Naive thymus-derived CD4-positive, alpha-beta T cell (primary cell): ENCODE measurements at regions of chr16 and their contacts with region 1.

Region 1: GRCh38 chr16:89720813-89721545 is at the starts of genes VPS9D1 and ZNF276:
- DNase-seq: peak in 7 of 9 donors; percentile 73 to 88 (median 87)
- ATAC-seq: peak; percentile 67
- H3K4me3 ChIP-seq: peak within 1 kb of the TSS; percentile 94
- H3K4me3 Mint-ChIP-seq: peak within 1 kb of the TSS; percentile 88 to 99 (median 94)
- H3K27ac ChIP-seq: peak within 1 kb of the TSS; percentile 89
- H3K27ac Mint-ChIP-seq: peak within 1 kb of the TSS; percentile 88 to 99 (median 95)
- H3K4me1 ChIP-seq: peaks cover 27 to 35% of the 10 kb centered on the region in 2 donors
- H3K4me1 Mint-ChIP-seq: peaks cover 13 to 37% (median 30%) of the 10 kb centered on the region in 7 donors
- H3K27me3 ChIP-seq: no peaks in the 10 kb centered on the region
- H3K27me3 Mint-ChIP-seq: no peaks in the 10 kb centered on the region
- total RNA-seq, gene VPS9D1: 11.2 to 28.9 (median 13.3) TPM
- total RNA-seq, gene ZNF276: 75.4 to 160 (median 137) TPM

Region 2: GRCh38 chr16:88706288-88706964 is 1014.6 kb before region 1 on chr16 and contains the starts of genes CTU2 and RNF166:
- CTCF ChIA-PET with region 1: no interaction called
- POLR2A ChIA-PET with region 1: no interaction called
- intact Hi-C with region 1: loop called in 1 of 2 experiments (anchors 10 kb)
- DNase-seq: peak; percentile 86 to 98 (median 92)
- ATAC-seq: peak; percentile 84
- H3K4me3 ChIP-seq: peak within 1 kb of the TSS; percentile 79
- H3K4me3 Mint-ChIP-seq: peak within 1 kb of the TSS; percentile 78 to 98 (median 94)
- H3K27ac ChIP-seq: peak within 1 kb of the TSS; percentile 88
- H3K27ac Mint-ChIP-seq: peak within 1 kb of the TSS; percentile 85 to 98 (median 97)
- H3K4me1 ChIP-seq: peaks cover 25 to 40% of the 10 kb centered on the region in 2 donors
- H3K4me1 Mint-ChIP-seq: peaks cover 31 to 45% (median 41%) of the 10 kb centered on the region in 7 donors
- H3K27me3 ChIP-seq: no peaks in the 10 kb centered on the region
- H3K27me3 Mint-ChIP-seq: no peaks in the 10 kb centered on the region
- total RNA-seq, gene CTU2: 26.0 to 43.3 (median 28.3) TPM
- total RNA-seq, gene RNF166: 99.8 to 324 (median 133) TPM

Region 3: DNA sequence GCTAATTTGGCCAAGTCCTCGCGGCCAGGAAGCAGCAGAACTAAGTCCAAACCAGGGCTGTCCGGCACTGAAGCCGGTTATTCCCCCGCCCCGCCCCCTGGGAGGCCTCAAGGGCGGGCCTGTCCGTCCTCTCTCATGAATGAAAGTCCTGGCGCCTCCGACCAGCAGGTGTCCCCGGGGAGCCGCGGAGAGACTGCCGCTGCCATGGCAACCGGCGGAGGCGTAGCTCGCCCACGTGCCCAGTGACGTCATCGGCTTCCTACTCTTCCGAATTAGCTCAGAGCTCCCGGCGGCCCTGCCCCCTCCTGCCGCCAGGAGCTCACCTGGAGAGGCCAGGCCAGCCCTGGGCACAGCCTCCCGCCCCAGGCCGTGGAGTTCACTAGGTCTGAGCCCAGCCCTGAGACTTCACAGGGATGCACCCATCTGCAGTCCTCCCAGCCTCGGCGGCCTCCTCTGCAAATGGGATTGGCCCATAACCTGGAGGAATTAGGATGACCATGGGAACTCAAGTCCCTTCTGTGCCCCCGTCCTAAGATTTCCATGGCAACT is 20.8 kb before region 1 on chr16:
- CTCF ChIA-PET with region 1: interaction called, 17 read pairs
- POLR2A ChIA-PET with region 1: interaction called, 50 read pairs
- intact Hi-C with region 1: loop called (anchors 1 kb)
- DNase-seq: peak; percentile 88 to 99 (median 92)
- ATAC-seq: peak; percentile 52
- H3K4me3 ChIP-seq: peak overlapping the region; percentile 41
- H3K4me3 Mint-ChIP-seq: peak overlapping the region; percentile 52 to 84 (median 74)
- H3K27ac ChIP-seq: peak overlapping the region; percentile 73
- H3K27ac Mint-ChIP-seq: peak overlapping the region in 8 of 9 donors; percentile 46 to 89 (median 80)
- H3K4me1 ChIP-seq: peaks cover 27 to 28% of the 10 kb centered on the region in 2 donors
- H3K4me1 Mint-ChIP-seq: peaks cover 0 to 34% (median 17%) of the 10 kb centered on the region in 7 donors
- H3K27me3 ChIP-seq: no peaks in the 10 kb centered on the region
- H3K27me3 Mint-ChIP-seq: no peaks in the 10 kb centered on the region

Region 4: DNA sequence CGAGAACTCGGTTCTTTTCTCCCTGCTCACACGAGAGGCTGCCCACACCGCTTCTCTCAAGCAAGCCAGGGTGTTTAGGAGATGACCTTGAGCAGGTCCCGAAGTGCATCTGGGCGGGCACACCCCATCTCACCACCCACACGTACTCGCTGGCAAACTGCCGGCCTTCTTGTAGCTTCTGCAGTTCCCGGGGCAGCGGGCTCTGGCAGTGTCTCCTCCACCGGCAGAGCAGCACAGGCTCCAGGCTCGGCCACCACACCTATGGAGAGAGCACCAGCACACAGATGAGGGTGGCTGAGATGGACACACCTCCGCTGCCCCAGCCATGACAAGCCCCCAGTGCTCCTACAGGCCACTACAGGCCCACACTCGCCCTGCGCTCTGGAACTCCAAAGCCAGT is 23.8 kb after region 1 on chr16:
- CTCF ChIA-PET with region 1: interaction called, 3 read pairs
- POLR2A ChIA-PET with region 1: interaction called, 156 read pairs
- intact Hi-C with region 1: no loop called
- DNase-seq: no peak
- ATAC-seq: no peak
- H3K4me3 ChIP-seq: no peak overlapping the region
- H3K4me3 Mint-ChIP-seq: no peak overlapping the region
- H3K27ac ChIP-seq: peak overlapping the region; percentile 47
- H3K27ac Mint-ChIP-seq: peak overlapping the region in 7 of 9 donors; percentile 52 to 86 (median 71)
- H3K4me1 ChIP-seq: peaks cover 0 to 12% of the 10 kb centered on the region in 2 donors
- H3K4me1 Mint-ChIP-seq: peaks cover 4 to 60% (median 33%) of the 10 kb centered on the region in 7 donors
- H3K27me3 ChIP-seq: no peaks in the 10 kb centered on the region
- H3K27me3 Mint-ChIP-seq: no peaks in the 10 kb centered on the region

Region 5: DNA sequence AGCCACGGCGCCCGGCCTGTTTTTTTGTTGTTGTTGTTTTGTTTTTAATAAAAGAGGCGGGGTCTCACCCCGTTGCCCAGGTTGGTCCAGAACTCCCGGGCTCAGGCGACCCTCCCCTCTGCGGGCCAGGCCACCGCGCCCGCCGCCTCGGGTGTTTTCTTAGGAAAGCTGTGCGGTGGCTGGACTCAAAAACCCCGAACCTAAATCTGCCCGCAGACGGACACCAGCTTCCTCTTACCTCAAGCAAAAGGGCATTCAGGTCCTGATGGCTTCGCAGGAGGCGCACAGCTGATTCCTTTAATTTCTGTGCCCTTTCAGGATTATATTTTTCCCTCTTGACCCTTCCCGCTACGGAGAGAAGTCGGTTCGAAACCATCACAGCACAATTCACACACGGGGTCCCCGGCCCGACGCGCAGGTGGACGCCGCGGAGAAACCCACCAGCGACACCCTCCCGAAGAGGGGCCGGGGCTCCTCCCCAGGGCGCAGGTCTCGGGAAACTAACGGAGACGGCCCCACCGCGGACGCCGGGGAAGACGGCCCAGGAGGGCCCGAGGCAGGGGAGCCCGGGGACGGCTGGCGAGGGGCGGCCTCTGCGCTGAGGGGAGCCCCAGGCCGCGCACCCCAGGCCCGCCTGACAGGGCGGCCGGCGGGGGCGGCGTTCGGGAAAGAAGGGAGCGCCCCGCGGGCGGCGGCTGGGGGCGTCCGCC is 94.8 kb after region 1 on chr16:
- CTCF ChIA-PET with region 1: no interaction called
- POLR2A ChIA-PET with region 1: interaction called, 5 read pairs
- intact Hi-C with region 1: loop called (anchors 1 to 5 kb)
- DNase-seq: no peak
- ATAC-seq: peak; percentile 14
- H3K4me3 ChIP-seq: peak overlapping the region; percentile 37
- H3K4me3 Mint-ChIP-seq: peak overlapping the region; percentile 68 to 89 (median 80)
- H3K27ac ChIP-seq: peak overlapping the region; percentile 13
- H3K27ac Mint-ChIP-seq: peak overlapping the region in 1 of 9 donors; percentile 66
- H3K4me1 ChIP-seq: peaks cover 3 to 4% of the 10 kb centered on the region in 2 donors
- H3K4me1 Mint-ChIP-seq: peaks cover 10 to 29% (median 20%) of the 10 kb centered on the region in 7 donors
- H3K27me3 ChIP-seq: no peaks in the 10 kb centered on the region
- H3K27me3 Mint-ChIP-seq: no peaks in the 10 kb centered on the region

Region 6: GRCh38 chr16:89917773-89918452 is 196.9 kb after region 1 on chr16:
- CTCF ChIA-PET with region 1: no interaction called
- POLR2A ChIA-PET with region 1: no interaction called
- intact Hi-C with region 1: loop called in 1 of 2 experiments (anchors 5 kb)
- DNase-seq: peak; percentile 53 to 83 (median 67)
- ATAC-seq: peak; percentile 81
- H3K4me3 ChIP-seq: peak overlapping the region; percentile 43
- H3K4me3 Mint-ChIP-seq: peak overlapping the region; percentile 67 to 86 (median 73)
- H3K27ac ChIP-seq: no peak overlapping the region
- H3K27ac Mint-ChIP-seq: peak overlapping the region in 4 of 9 donors; percentile 44 to 87 (median 71)
- H3K4me1 ChIP-seq: peaks cover 20 to 25% of the 10 kb centered on the region in 2 donors
- H3K4me1 Mint-ChIP-seq: peaks cover 20 to 52% (median 38%) of the 10 kb centered on the region in 7 donors
- H3K27me3 ChIP-seq: peaks cover 0 to 6% of the 10 kb centered on the region in 2 donors
- H3K27me3 Mint-ChIP-seq: peaks cover 4 to 30% (median 17%) of the 10 kb centered on the region in 5 donors

Region 7: DNA sequence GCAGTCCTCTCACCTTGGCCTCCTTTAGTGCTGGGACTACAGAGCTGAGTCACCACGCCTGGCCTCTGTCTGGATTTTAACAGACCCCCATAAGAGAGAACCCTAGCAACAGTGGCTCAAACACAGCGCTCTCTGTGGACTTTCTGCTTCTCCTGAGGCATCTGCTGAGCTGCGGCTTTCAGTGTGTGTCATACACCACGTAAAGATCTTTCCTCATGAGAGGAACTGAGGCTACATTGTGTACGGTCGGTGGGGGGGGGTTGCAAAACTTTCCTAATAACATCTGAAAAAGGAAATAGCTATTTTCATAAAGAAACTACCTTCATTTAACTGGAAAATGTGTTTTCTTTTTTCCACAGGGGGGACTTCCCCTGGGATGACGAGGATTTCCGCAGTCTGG is 260.4 kb after region 1 on chr16:
- CTCF ChIA-PET with region 1: no interaction called
- POLR2A ChIA-PET with region 1: no interaction called
- intact Hi-C with region 1: no loop called
- DNase-seq: no peak
- ATAC-seq: no peak
- H3K4me3 ChIP-seq: no peak overlapping the region
- H3K4me3 Mint-ChIP-seq: no peak overlapping the region
- H3K27ac ChIP-seq: no peak overlapping the region
- H3K27ac Mint-ChIP-seq: no peak overlapping the region
- H3K4me1 ChIP-seq: no peaks in the 10 kb centered on the region
- H3K4me1 Mint-ChIP-seq: peaks cover 0 to 5% (median 0%) of the 10 kb centered on the region in 7 donors
- H3K27me3 ChIP-seq: no peaks in the 10 kb centered on the region
- H3K27me3 Mint-ChIP-seq: no peaks in the 10 kb centered on the region

Region 8: GRCh38 chr16:89994389-89994720 is 273.4 kb after region 1 on chr16:
- CTCF ChIA-PET with region 1: no interaction called
- POLR2A ChIA-PET with region 1: no interaction called
- intact Hi-C with region 1: no loop called
- DNase-seq: no peak
- ATAC-seq: no peak
- H3K4me3 ChIP-seq: no peak overlapping the region
- H3K4me3 Mint-ChIP-seq: peak overlapping the region in 1 of 10 donors; percentile 25
- H3K27ac ChIP-seq: no peak overlapping the region
- H3K27ac Mint-ChIP-seq: peak overlapping the region in 8 of 9 donors; percentile 8 to 82 (median 74)
- H3K4me1 ChIP-seq: no peaks in the 10 kb centered on the region
- H3K4me1 Mint-ChIP-seq: peaks cover 0 to 15% (median 0%) of the 10 kb centered on the region in 7 donors
- H3K27me3 ChIP-seq: no peaks in the 10 kb centered on the region
- H3K27me3 Mint-ChIP-seq: no peaks in the 10 kb centered on the region